ENCODE measurements at regions of chr5 and their contacts with region 1.

Region 1: DNA sequence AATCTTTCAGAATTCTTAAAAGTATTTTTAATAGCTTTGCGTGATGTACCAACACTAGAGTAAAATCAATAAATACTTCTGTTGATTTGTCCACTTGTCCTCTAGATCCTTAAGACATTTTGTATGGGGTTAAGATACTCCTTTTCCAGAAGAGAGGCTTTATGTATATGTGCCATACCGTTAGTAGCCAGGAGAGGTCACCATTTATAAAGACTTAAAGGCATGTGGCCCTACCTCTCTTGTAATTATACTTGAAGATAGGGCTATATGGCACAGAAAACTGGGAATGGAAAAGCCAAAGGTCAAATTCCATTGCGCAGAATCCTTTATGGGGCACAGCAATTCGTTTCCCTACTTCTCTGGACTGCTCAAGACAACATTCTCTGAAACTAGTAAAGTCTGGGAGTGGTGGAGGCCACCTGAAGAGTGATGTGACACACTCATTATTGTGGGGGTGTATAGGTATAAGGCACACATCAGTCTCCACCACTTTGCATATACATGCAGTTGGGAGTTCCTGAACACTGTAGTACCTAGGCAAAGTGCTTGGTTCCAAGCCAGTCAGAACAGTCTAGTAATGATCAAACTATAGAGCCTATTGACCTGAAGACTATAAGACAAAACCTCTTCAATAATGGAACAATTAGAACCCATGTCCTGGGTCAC is 140.1 kb upstream of the FBXL17 start:
- DNase-seq: peak; percentile 72
- H3K4me3 Mint-ChIP-seq: no peak overlapping the region
- H3K27ac Mint-ChIP-seq: no peak overlapping the region
- H3K4me1 Mint-ChIP-seq: no peaks in the 10 kb centered on the region
- H3K27me3 Mint-ChIP-seq: peaks cover 2% of the 10 kb centered on the region

Region 2: DNA sequence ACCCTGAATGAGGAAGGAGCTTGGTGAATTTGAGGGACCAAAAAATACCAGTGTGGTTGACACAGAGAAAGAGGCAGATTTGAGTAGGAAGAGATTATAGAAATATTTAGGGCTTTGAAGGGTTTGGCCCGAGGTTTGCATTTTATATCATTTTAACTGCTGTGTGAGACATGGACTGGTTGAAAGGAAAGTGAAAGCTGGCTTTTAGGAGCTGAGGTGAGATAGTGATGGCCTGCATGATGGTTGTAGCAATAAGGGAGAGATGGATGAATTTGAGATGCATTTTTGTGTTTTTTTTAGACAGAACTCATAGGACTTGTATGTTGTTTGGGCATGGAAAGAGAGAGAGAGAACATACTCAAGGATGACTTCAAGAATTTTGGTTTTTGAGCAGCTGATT is 247.4 kb after region 1 on chr5:
- intact Hi-C with region 1: no loop called
- DNase-seq: no peak
- H3K4me3 Mint-ChIP-seq: peak overlapping the region; percentile 0
- H3K27ac Mint-ChIP-seq: no peak overlapping the region
- H3K4me1 Mint-ChIP-seq: peaks cover 5% of the 10 kb centered on the region
- H3K27me3 Mint-ChIP-seq: no peaks in the 10 kb centered on the region

Region 3: DNA sequence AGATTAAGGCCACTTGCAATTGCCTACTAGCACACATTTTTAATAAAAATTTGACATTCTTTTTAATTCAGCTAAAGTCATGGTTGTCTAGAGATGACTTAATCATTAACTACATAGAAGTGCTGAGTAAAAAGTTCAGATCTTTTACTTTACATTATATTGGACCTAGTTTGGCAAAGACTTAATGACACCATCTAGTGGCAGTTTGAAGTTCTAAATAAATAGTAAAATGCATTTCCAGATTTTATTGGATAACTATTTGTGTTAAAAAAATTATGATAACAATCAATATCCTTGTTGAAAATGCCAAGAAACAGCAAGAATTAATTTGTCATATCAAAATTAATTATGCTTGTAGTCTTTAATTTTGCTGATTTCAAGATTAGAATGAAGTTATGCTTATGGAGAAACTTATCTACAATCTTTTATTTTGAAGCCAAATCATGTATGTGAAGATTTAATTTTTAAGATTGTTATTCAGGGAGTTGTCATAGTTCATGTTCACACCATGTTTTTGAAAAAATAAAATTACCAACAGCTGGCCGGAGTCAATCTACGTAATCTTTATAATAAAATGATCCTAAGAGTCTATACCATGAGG is 957.4 kb after region 1 on chr5:
- intact Hi-C with region 1: loop called (anchors 10 kb)
- DNase-seq: no peak
- H3K4me3 Mint-ChIP-seq: no peak overlapping the region
- H3K27ac Mint-ChIP-seq: no peak overlapping the region
- H3K4me1 Mint-ChIP-seq: no peaks in the 10 kb centered on the region
- H3K27me3 Mint-ChIP-seq: peaks cover 4% of the 10 kb centered on the region